Heart left ventricle (tissue), 16 donors: ENCODE measurements at regions of chr20 and their contacts with region 1.

Region 1: GRCh38 chr20:63980806-63981728 is at the start of gene PRPF6:
- DNase-seq: peak; percentile 95 to 98 (median 97)
- ATAC-seq: peak; percentile 88 to 94 (median 90)
- H3K4me3 ChIP-seq: peak within 1 kb of the TSS; percentile 73 to 100 (median 93)
- H3K27ac ChIP-seq: peak within 1 kb of the TSS; percentile 53 to 93 (median 86)
- H3K4me1 ChIP-seq: peaks cover 7 to 45% (median 35%) of the 10 kb centered on the region in 12 donors
- H3K27me3 ChIP-seq: no peaks in the 10 kb centered on the region
- CTCF ChIP-seq: peak; percentile 66 to 98 (median 89)
- POLR2A ChIP-seq: peak in 1 of 2 donors; percentile 72
- total RNA-seq, gene PRPF6: 41.4 to 62.6 (median 47.6) TPM

Region 2: DNA sequence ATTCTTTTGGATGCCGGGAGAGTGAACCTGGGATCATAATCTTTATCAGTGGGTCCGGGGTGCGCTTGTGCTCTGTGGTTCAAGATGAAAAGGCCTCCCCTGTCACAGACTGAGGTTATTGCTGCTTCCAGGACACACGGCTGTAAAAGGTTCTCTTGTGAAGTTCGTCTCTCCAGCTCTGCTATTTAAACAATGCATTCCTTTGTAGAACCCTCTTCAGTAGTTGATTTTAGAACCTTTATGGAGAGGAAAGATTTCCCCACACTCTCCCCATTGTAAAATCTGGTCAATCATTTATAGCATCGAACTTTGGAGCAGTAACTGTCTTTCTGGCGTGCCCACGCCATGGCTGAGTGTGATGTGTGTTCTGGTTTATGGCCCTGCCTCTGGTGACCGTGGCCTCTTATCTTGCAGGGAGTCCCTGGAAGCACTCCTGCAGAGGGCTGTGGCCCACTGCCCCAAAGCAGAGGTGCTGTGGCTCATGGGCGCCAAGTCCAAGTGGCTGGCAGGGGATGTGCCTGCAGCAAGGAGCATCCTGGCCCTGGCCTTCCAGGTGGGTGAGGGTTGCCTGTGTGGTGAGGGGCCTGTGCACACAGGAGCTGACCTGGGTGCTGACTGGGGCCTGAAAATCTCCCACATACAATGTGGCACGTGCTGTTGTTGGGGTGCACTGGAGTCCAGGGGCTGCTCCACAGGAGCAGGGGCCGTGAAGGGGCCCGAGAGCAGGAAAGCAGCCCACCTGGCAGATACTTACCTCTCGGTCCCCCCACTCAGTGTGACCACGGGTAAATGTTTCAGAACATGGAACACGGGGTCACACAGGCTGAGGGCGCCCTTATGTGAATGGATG is 43.3 kb after region 1 on chr20:
- intact Hi-C with region 1: loop called in 1 of 10 experiments (anchors 5 kb)
- DNase-seq: no peak
- ATAC-seq: no peak
- H3K4me3 ChIP-seq: no peak overlapping the region
- H3K27ac ChIP-seq: no peak overlapping the region
- H3K4me1 ChIP-seq: no peaks in the 10 kb centered on the region
- H3K27me3 ChIP-seq: no peaks in the 10 kb centered on the region
- CTCF ChIP-seq: no peak
- POLR2A ChIP-seq: no peak

Region 3: DNA sequence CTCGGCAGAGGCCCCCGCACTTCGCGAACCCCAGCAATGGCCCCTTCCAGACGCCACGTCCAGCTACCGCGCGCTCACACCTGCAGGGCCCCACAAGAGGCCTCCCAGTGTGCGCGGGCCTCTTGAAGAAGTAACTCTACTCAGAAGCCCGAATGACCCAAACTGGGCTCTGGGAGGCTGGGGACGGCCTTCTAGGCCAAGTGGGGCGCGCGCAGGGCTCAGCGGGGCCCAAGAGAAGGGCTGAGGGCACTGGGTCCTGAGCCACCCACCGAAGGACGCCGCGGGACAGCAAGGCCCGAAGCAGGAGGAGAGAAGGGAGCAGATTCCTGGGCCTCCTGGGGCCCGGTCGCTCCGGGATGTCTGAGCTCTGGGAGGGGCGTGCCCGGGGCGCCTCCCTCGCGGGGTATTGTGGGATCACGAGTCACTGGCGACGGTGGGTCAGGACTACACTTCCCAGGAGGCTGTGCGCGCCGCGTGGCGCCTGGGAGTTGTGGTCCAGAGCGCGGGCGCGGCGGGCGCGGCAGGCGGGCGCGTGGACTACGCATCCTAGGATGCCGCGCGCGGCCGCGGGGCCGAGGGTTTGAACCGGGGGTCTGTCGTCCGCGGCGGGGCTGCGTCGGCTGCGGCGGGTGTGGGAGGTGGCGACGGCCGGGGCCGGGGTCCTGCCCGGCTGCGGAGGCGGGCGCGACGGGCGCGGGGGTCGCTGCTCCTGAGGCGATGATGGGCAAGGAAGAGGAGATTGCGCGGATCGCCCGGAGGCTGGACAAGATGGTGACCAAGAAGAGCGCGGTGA is 81.7 kb after region 1 on chr20 and contains the start of gene TCEA2:
- intact Hi-C with region 1: loop called in 3 of 10 experiments (anchors 2 to 5 kb)
- DNase-seq: peak; percentile 97 to 99 (median 98)
- ATAC-seq: peak; percentile 95 to 98 (median 95)
- H3K4me3 ChIP-seq: peak within 1 kb of the TSS; percentile 68 to 99 (median 92)
- H3K27ac ChIP-seq: peak within 1 kb of the TSS; percentile 59 to 89 (median 85)
- H3K4me1 ChIP-seq: peaks cover 6 to 48% (median 24%) of the 10 kb centered on the region in 12 donors
- H3K27me3 ChIP-seq: no peaks in the 10 kb centered on the region
- CTCF ChIP-seq: no peak
- POLR2A ChIP-seq: peak in 1 of 2 donors; percentile 90
- total RNA-seq, gene TCEA2: 19.2 to 52.1 (median 42.9) TPM